IMR-90 (cell line): ENCODE measurements at regions of chr11 and their contacts with region 1.

Region 1: GRCh38 chr11:7046474-7047175 is 26.3 kb downstream of the NLRP14 start:
- DNase-seq: peak; percentile 84
- ATAC-seq: peak; percentile 91
- H3K4me3 ChIP-seq: no peak overlapping the region
- H3K27ac ChIP-seq: no peak overlapping the region
- H3K4me1 ChIP-seq: no peaks in the 10 kb centered on the region
- H3K27me3 ChIP-seq: 0 out of 2 replicates have a peak, but pooled peaks cover 1% of the 10 kb centered on the region
- CTCF ChIP-seq: no peak
- POLR2A ChIP-seq: no peak
- RAD21 ChIP-seq: no peak

Region 2: GRCh38 chr11:5955586-5955985 is 1091.0 kb before region 1 on chr11:
- CTCF ChIA-PET with region 1: no interaction called
- POLR2A ChIA-PET with region 1: no interaction called
- dilution Hi-C with region 1: no loop called
- in situ Hi-C with region 1: no loop called
- intact Hi-C with region 1: loop called (anchors 5 kb)
- DNase-seq: no peak
- ATAC-seq: no peak
- H3K4me3 ChIP-seq: no peak overlapping the region
- H3K27ac ChIP-seq: no peak overlapping the region
- H3K4me1 ChIP-seq: no peaks in the 10 kb centered on the region
- H3K27me3 ChIP-seq: no peaks in the 10 kb centered on the region
- CTCF ChIP-seq: no peak
- POLR2A ChIP-seq: no peak
- RAD21 ChIP-seq: no peak